ENCODE measurements at regions of chr9 and their contacts with region 1.

Region 1: GRCh38 chr9:127785023-127785932 is 556 bp upstream of the CDK9 start:
- DNase-seq: peak; percentile 87
- H3K4me3 Mint-ChIP-seq: peak overlapping the region; percentile 96
- H3K27ac Mint-ChIP-seq: peak overlapping the region; percentile 99
- H3K4me1 Mint-ChIP-seq: peaks cover 67% of the 10 kb centered on the region
- H3K27me3 Mint-ChIP-seq: no peaks in the 10 kb centered on the region

Region 2: GRCh38 chr9:127796225-127796813 is 11.0 kb after region 1 on chr9:
- intact Hi-C with region 1: loop called (anchors 1 kb)
- DNase-seq: no peak
- H3K4me3 Mint-ChIP-seq: peak overlapping the region; percentile 73
- H3K27ac Mint-ChIP-seq: peak overlapping the region; percentile 90
- H3K4me1 Mint-ChIP-seq: peaks cover 33% of the 10 kb centered on the region
- H3K27me3 Mint-ChIP-seq: peaks cover 2% of the 10 kb centered on the region

Region 3: GRCh38 chr9:127802576-127803443 is 17.5 kb after region 1 on chr9 and contains the start of gene FPGS:
- intact Hi-C with region 1: loop called (anchors 1 kb)
- DNase-seq: peak; percentile 74
- H3K4me3 Mint-ChIP-seq: peak within 1 kb of the TSS; percentile 97
- H3K27ac Mint-ChIP-seq: peak within 1 kb of the TSS; percentile 93
- H3K4me1 Mint-ChIP-seq: peaks cover 17% of the 10 kb centered on the region
- H3K27me3 Mint-ChIP-seq: no peaks in the 10 kb centered on the region
- total RNA-seq, gene FPGS: 128 and 130 TPM in 2 replicates

Region 4: DNA sequence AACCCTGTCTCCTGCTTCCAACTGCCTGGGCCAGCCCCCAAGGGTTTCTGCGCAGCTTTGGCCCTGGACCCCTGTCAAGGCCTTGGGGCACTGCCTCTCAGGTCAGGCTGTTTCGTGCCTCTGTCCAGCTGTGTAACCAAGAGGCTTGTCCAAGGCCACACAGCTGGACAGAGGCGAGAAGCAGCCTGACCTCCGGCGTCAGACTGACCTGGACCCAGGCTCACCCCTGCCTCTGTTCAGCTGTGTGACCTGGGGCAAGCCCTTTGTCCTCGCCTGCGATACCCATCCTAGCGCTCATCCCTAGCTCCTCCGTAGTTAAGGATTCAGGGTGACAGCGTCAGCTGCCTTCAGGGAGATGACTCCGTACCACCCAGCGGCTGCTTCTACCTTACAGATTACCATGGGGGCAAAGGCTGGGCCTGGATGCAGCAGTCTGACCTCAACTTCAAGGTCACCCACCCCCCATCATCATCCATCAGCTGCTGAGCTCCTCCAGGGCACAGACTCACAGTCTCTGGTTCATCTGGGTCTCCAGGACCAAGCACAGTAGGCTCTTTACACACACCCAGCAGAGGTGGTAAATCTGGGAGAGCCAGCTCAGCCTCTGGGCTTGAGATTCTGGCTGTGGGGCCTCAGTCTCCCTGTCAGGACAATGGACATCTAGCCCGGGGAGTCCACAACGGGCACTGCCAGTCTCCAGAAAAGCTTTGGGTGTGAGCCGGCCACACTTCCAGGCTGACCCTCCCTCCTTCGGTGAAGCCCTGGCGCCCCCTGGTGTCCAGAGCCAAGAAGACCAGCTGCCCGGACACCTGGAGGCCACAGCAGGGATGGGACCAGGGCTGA is 84.3 kb after region 1 on chr9:
- intact Hi-C with region 1: loop called (anchors 1 kb)
- DNase-seq: peak; percentile 69
- H3K4me3 Mint-ChIP-seq: no peak overlapping the region
- H3K27ac Mint-ChIP-seq: no peak overlapping the region
- H3K4me1 Mint-ChIP-seq: peaks cover 12% of the 10 kb centered on the region
- H3K27me3 Mint-ChIP-seq: no peaks in the 10 kb centered on the region

Region 5: GRCh38 chr9:127903557-127904475 is 118.5 kb after region 1 on chr9:
- intact Hi-C with region 1: loop called (anchors 1 kb)
- DNase-seq: peak; percentile 83
- H3K4me3 Mint-ChIP-seq: peak overlapping the region; percentile 93
- H3K27ac Mint-ChIP-seq: peak overlapping the region; percentile 100
- H3K4me1 Mint-ChIP-seq: peaks cover 47% of the 10 kb centered on the region
- H3K27me3 Mint-ChIP-seq: no peaks in the 10 kb centered on the region

Region 6: GRCh38 chr9:128026773-128027541 is 241.7 kb after region 1 on chr9:
- intact Hi-C with region 1: loop called (anchors 5 kb)
- DNase-seq: peak; percentile 37
- H3K4me3 Mint-ChIP-seq: peak overlapping the region; percentile 60
- H3K27ac Mint-ChIP-seq: peak overlapping the region; percentile 93
- H3K4me1 Mint-ChIP-seq: peaks cover 81% of the 10 kb centered on the region
- H3K27me3 Mint-ChIP-seq: peaks cover 4% of the 10 kb centered on the region

Measured in activated T-helper 1 cell treated with anti-CD3 and anti-CD28 coated beads, Interleukin-12 subunit alpha, Interleukin-12 subunit beta, Interleukin-2, Interleukin-4 antibody, amounts not matched to agents 30 ng/mL and 10 ng/mL and 1 ng/mL, durations not matched to agents 14 hours and 24 hours and 36 hours (primary cell).